GM10248 (cell line): ENCODE measurements at regions of chr1 and their contacts with region 1.

Region 1: GRCh38 chr1:19704247-19705113 is 39.8 kb downstream of the HTR6 start:
- DNase-seq: peak; percentile 74
- CTCF ChIP-seq: peak; percentile 96

Region 2: DNA sequence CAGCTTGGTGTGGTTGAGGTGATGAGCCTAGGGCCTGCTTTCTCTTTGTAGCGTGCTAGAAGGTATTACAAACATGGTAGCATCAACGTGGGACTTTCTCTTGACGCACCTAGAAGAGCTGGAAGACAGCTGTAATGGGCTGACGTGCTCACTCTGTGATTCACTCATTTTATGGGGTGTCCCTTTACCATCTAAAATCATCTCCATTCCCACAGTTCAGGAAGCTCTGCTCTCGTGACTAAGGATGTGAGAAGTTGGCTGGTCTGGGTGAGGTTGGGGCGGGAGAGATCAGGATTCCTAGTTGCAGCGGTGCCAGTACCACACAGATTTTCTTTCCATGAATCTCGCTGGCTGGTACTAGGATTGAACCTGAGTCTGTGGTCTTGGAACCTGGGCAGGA is 35.6 kb before region 1 on chr1:
- CTCF ChIA-PET with region 1: interaction called, 114 read pairs
- POLR2A ChIA-PET with region 1: no interaction called
- DNase-seq: no peak
- CTCF ChIP-seq: no peak

Region 3: DNA sequence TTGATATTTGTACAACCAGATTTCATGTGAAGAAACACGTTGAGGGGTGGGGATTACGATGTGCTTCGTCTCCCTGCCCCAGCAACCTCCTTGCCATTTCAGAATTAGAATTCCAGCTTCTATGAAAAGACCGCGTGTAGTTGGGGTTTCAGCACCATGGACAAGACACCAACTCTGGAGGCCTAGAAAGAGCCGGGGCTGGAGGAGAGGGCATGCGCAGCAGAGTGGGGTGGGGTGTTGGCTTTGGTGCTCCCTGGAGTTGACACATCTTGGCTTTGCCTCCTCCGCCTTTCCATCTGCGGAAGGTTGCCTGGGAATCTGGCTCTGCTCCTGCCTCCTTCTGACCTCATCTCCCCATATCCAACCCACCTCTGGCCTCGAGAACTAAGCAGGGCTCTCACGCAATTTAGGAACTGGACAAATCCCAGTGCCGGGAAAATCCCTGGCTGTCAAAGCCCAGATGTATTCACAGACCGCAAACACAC is 28.0 kb before region 1 on chr1:
- CTCF ChIA-PET with region 1: interaction called, 19 read pairs
- POLR2A ChIA-PET with region 1: no interaction called
- DNase-seq: peak; percentile 44
- CTCF ChIP-seq: no peak

Region 4: GRCh38 chr1:19682257-19682656 is 22.2 kb before region 1 on chr1:
- CTCF ChIA-PET with region 1: interaction called, 19 read pairs
- POLR2A ChIA-PET with region 1: no interaction called
- DNase-seq: no peak
- CTCF ChIP-seq: no peak

Region 5: GRCh38 chr1:19688041-19688842 is 16.2 kb before region 1 on chr1:
- CTCF ChIA-PET with region 1: interaction called, 80 read pairs
- POLR2A ChIA-PET with region 1: no interaction called
- DNase-seq: no peak
- CTCF ChIP-seq: no peak

Region 6: DNA sequence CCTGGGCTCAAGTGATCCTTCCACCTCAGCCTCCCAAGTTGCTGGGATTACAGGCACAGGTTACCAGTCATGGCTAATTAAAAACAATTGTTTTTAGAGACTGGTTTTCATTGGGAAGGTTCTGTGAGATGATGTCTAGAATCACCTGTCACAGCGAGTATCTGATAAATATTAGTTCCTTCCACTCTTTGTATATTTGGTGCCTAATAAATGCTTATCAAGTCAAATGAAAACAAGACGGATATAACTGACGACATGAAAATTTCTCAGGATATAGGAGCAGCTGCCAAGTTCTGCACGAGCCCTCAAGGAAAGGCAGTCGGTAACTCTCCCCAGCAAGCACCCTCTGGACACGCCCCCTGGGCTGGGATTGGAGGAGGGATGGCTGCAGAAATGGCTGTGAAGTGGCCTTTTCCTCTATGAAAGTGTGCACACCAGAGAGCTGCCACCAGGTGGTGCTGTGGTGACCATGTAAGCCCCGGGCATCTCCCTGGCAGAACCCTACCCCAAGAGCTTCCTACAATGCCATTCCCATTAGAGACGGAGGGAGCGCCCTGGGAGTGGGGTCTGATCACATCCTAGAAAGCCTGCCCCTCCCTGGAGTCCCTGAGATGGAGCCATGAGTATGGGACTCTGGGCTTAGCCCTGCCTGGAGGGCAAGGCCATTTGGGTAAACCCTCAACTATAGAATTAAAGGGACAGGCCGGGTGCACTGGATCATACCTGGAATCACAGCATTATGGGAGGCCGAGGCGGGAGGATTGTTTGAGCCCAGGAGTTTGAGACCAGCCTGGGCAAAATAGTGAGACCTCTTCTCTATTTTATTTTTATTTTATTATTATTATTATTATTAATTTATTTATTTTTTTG is 11.1 kb after region 1 on chr1:
- CTCF ChIA-PET with region 1: interaction called, 87 read pairs
- POLR2A ChIA-PET with region 1: no interaction called
- DNase-seq: peak; percentile 83
- CTCF ChIP-seq: peak; percentile 79

Region 7: DNA sequence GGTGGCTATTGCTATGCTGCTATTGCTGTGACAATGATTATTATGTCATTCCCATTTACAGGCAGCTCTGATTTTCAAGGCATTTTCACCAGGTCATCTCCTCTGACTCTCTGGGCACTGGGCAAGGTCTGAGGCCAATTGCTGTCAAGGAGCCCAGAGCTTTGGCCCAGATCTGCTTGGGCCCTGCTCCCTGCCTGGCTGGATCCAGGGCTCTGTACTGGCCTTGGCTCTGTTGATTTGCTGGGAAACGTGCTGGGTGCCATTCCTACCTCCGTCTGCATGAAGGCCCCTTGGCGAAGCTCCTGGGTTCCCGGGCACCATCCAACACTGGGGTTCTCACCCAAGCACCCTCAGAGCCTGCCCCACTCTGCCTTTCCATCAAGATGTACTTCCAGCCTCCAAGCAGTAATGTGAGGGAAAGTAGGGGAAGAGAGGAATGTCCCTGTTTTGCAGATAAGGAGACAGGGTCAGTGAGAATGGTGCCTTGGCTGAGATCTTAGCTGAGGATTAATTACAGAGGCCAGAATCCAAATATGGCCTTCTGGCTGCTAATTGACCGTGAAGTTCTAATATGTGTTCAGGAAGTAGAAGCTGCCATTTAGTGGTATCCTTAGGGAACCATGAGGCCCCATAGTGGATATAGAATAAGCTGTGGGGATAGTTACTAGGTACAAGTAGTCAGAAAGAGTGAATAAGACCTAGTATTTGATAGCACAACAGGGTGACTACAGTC is 24.1 kb after region 1 on chr1:
- CTCF ChIA-PET with region 1: interaction called, 14 read pairs
- POLR2A ChIA-PET with region 1: no interaction called
- DNase-seq: no peak
- CTCF ChIP-seq: no peak